Activated B cell treated with CpG ODN at 0.5 μM for 24 hours (primary cell): ENCODE measurements at regions of chr10 and their contacts with region 1.

Region 1: DNA sequence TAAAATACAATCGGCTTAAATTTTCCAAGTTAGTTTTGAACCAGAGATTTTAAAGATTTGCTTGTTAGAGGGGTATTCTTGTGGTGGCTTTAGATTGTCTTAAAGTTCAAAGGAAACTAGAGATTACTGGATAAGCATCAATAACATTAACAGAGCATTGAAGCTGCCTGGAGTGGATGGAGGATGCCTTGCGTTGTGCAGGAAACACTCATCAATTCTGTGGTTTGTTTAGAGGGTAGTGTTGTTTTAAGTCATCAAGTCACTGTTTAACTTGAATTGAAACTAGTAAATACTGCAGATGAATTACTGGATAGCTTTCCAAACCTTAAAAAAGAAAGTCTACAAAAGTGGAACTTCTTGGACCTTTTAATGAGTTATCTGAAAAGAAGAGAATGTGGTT is 218.6 kb downstream of the CELF2 start:
- DNase-seq: no peak
- ATAC-seq: no peak
- H3K4me3 Mint-ChIP-seq: no peak overlapping the region
- H3K27ac Mint-ChIP-seq: peak overlapping the region; percentile 50
- H3K4me1 Mint-ChIP-seq: peaks cover 65% of the 10 kb centered on the region
- H3K27me3 Mint-ChIP-seq: no peaks in the 10 kb centered on the region
- CTCF ChIP-seq: no peak

Region 2: GRCh38 chr10:10818082-10818481 is 418.2 kb before region 1 on chr10:
- CTCF ChIA-PET with region 1: no interaction called
- POLR2A ChIA-PET with region 1: interaction called, 13 read pairs
- intact Hi-C with region 1: no loop called
- DNase-seq: no peak
- ATAC-seq: no peak
- H3K4me3 Mint-ChIP-seq: no peak overlapping the region
- H3K27ac Mint-ChIP-seq: no peak overlapping the region
- H3K4me1 Mint-ChIP-seq: no peaks in the 10 kb centered on the region
- H3K27me3 Mint-ChIP-seq: peaks cover 9% of the 10 kb centered on the region
- CTCF ChIP-seq: no peak